ENCODE measurements at regions of chr3 and their contacts with region 1.

Region 1: DNA sequence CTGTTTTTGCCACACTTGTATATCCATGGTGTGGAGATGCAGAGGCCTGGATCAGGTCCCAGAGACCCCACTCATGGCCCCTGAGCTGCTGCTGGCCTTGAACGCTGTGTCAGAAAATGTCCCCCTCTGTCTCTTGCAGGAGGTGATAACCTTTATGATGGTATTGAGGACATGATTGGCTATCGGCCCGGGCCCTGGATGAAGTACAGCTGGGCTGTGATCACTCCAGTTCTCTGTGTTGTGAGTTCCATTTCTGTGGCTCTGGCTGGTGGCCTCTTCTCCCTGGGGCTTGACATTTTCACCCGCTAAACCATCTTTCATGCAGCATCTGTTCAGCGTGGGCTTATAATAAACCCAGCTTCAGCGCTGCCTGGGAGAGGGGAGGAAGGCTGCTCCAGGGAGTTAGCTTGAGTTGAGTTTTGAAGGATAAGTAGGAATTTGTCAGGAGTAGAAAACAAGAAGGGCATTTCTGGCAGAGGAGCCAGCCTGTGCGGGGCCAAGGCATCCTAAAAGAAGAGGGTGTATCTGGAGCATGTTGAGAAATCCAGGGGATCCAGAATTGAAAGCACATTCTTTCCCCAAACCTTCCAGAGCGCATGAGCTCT is 61.1 kb downstream of the GRIP2 start:
- DNase-seq: peak; percentile 67

Region 2: GRCh38 chr3:13452490-13453335 is 1026.3 kb before region 1 on chr3:
- intact Hi-C with region 1: loop called in 1 of 2 experiments (anchors 5 kb)
- DNase-seq: no peak

Region 3: DNA sequence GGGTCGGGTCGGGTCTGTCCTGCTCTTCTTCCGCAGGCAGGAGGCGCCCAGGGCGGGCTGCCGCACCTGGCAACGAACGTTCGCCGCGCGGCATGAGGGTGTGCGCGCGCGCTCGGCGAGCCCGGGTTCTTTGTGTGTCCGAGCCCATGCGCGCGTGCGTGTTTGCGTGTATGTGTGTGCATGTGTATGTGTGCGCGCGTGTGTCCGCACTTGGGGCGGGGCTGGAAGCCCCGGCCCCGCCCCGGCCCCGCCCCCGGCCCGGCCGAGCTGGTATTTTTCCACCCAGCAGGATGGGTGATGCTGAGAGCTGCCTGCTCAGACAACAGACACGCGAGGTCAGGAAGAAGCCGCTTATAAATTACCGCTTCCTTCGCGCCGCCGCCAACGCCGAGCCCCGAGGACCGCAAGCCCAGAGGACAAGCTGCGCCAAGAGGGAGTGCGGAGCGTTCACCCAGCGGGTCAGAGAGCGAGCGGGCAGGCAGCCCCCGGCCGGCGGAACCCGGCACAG is 76.7 kb before region 1 on chr3 and contains the start of gene SLC6A6:
- intact Hi-C with region 1: no loop called
- DNase-seq: peak; percentile 97
- total RNA-seq, gene SLC6A6: 13.3 to 23.6 TPM